Endothelial cell of umbilical vein (primary cell): ENCODE measurements at regions of chr2 and their contacts with region 1.

Region 1: GRCh38 chr2:88659538-88659916 is 31.9 kb upstream of the RPIA start:
- DNase-seq: peak; percentile 88
- H3K4me3 ChIP-seq: peak overlapping the region in 1 of 3 experiments; percentile 4
- H3K27ac ChIP-seq: peak overlapping the region; percentile 37
- H3K4me1 ChIP-seq: peaks cover 11% of the 10 kb centered on the region
- H3K27me3 ChIP-seq: no peaks in the 10 kb centered on the region
- CTCF ChIP-seq: no peak
- POLR2A ChIP-seq: no peak

Region 2: GRCh38 chr2:86747711-86748639 is 1911.6 kb before region 1 on chr2:
- CTCF ChIA-PET with region 1: no interaction called
- POLR2A ChIA-PET with region 1: no interaction called
- dilution Hi-C with region 1: no loop called
- intact Hi-C with region 1: no loop called
- DNase-seq: peak; percentile 20
- H3K4me3 ChIP-seq: no peak overlapping the region
- H3K27ac ChIP-seq: no peak overlapping the region
- H3K4me1 ChIP-seq: no peaks in the 10 kb centered on the region
- H3K27me3 ChIP-seq: no peaks in the 10 kb centered on the region
- CTCF ChIP-seq: no peak
- POLR2A ChIP-seq: no peak

Region 3: DNA sequence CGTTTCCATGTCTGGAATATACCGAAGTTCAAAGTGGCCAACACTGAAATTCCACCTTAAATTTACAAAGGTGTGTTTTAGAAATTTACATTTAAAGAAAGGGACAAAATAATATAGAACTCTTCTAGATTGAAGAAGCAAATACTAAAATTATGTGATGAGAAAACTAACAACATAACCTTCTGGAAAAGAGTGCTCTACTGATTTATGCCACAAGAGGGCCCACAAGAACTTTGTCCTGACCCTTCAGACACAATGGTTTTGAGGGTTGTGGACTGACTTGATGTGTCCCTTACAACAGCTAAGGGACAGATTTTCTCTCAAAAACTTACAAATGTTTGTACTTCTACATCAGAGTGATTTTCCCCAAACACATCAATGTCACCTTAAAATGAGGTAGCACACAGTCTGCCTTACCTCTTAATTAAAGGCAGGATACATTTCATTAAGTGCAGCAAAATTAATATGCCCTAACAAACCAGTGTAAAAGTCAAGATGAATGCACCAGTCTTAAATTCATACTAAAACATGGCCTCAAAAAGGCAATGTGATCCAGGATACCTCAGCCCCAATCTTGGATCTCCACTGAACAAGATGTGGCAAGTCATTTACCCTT is 68.4 kb before region 1 on chr2:
- CTCF ChIA-PET with region 1: interaction called, 378 read pairs
- POLR2A ChIA-PET with region 1: no interaction called
- dilution Hi-C with region 1: no loop called
- intact Hi-C with region 1: no loop called
- DNase-seq: peak; percentile 77
- H3K4me3 ChIP-seq: no peak overlapping the region
- H3K27ac ChIP-seq: no peak overlapping the region
- H3K4me1 ChIP-seq: no peaks in the 10 kb centered on the region
- H3K27me3 ChIP-seq: no peaks in the 10 kb centered on the region
- CTCF ChIP-seq: peak; percentile 63
- POLR2A ChIP-seq: no peak

Region 4: GRCh38 chr2:88600038-88600465 is 59.5 kb before region 1 on chr2:
- CTCF ChIA-PET with region 1: interaction called, 378 read pairs
- POLR2A ChIA-PET with region 1: no interaction called
- dilution Hi-C with region 1: no loop called
- intact Hi-C with region 1: loop called (anchors 1 kb)
- DNase-seq: peak; percentile 99
- H3K4me3 ChIP-seq: no peak overlapping the region
- H3K27ac ChIP-seq: peak overlapping the region; percentile 84
- H3K4me1 ChIP-seq: peaks cover 35% of the 10 kb centered on the region
- H3K27me3 ChIP-seq: no peaks in the 10 kb centered on the region
- CTCF ChIP-seq: no peak
- POLR2A ChIP-seq: no peak